ENCODE measurements at regions of chr14 and their contacts with region 1.

Region 1: GRCh38 chr14:87830443-87831096 is 162.4 kb downstream of the GALC start:
- DNase-seq: no peak
- ATAC-seq: no peak
- H3K4me3 ChIP-seq: no peak overlapping the region
- H3K27ac ChIP-seq: peak overlapping the region in 7 of 12 donors; percentile 25 to 59 (median 35)
- H3K4me1 ChIP-seq: peaks cover 0 to 13% (median 0%) of the 10 kb centered on the region in 12 donors
- H3K27me3 ChIP-seq: no peaks in the 10 kb centered on the region
- CTCF ChIP-seq: no peak
- POLR2A ChIP-seq: no peak

Region 2: DNA sequence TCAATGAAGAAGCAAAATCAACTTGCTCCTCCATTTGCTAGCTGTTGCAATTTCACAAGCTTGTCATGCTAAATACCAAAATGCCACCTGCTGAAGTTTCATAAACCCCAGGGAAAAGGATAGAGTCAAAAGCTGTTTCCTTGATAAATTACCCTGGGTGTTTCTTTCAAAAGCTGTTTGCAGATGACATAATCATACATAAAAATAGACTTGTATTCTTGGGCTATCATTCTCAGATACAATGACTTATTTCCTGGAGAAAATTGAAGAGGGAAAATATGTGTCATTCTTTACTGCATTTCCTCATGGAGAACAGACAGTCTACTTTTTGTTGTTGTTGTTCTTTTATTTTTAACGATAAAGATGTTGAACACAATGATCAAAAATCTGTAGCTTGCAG is 43.2 kb after region 1 on chr14:
- intact Hi-C with region 1: loop called in 1 of 10 experiments (anchors 2 kb)
- DNase-seq: no peak
- ATAC-seq: peak in 2 of 4 donors; percentile 30 to 59
- H3K4me3 ChIP-seq: no peak overlapping the region
- H3K27ac ChIP-seq: peak overlapping the region in 3 of 12 donors; percentile 15 to 63 (median 31)
- H3K4me1 ChIP-seq: peaks cover 0 to 17% (median 0%) of the 10 kb centered on the region in 12 donors
- H3K27me3 ChIP-seq: no peaks in the 10 kb centered on the region
- CTCF ChIP-seq: no peak
- POLR2A ChIP-seq: no peak

Measured in heart left ventricle (tissue), 16 donors.